Mammary epithelial cell (primary cell): ENCODE measurements at regions of chr20 and their contacts with region 1.

Region 1: DNA sequence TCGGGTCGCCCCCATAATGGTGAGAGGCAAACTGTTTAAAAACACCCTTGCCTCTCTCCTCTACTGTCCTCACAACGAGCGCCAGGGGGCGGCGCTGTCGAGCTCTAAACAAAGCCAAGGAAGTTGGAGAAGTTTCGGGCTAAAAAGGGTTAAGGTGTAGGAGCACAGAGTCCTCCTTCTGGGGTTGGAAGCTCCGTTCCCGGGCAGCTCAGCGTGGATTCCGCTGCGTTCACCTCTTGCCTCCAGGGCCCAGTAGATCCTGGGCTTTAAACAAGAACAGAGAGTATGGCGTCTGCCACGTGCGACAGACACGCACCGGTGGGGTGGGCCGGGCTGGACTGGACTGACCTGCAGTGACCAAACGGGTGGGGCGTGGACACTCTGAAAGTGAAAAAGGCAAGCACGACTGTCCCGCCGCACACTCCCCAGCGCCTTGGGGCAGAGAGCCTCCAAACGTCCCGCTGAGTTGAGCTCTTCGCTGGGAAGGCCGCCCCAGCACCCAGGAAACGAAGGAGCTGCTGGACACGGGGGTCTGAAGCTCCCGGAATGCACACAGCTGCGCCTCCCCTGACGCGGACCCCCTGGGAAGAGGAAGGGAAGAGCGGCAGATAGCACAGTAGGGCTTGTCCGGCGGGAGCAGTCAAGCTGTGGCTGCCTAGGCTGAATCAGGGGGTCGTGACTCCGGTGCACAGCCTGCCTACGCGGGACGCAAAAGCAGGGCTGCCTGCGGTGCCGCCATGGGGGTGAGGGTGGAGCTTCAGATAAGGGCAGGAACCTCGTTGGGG is 1.6 kb upstream of the THBD start:
- DNase-seq: peak; percentile 63
- H3K4me3 ChIP-seq: peak overlapping the region in 2 of 3 experiments; percentile 53 to 55
- H3K27ac ChIP-seq: no peak overlapping the region
- H3K4me1 ChIP-seq: peaks cover 38% of the 10 kb centered on the region
- H3K27me3 ChIP-seq: no peaks in the 10 kb centered on the region
- CTCF ChIP-seq: peak; percentile 76 to 81

Region 2: DNA sequence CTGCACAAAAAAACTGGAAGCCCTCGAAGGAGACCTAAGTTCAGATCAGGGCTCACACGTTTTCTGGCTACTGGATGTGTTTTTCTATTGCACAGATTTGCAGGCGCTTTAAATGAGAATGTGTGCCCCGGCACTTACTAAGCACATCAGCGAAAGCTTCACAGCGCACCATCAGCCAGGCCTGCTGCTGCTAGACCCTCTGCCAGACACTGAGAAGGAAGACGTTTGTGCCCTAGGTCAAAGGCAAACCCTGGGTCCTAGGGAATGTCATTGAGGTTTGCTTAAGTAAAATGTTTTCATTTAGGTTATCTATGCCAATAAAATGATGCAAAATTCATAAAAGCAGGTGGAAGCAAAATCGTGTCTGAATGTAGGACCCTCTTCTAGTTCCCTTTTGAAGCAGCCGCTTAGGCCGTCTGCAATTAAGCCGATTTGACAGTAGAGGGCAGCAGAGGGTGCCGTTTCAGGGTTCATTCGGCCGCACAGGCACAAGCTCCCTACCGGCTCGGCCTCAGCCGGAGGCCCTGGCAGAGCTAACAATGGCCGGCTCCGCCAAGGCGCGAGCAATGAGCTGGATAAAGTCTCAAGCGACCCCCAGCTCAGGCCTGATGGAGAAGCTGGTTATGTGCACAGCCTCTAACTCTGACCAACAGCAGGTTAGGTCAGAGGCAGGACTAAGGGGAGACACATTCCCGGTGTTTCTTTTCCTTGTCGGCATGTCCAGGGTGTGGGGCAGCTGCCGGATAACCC is 359.5 kb before region 1 on chr20:
- CTCF ChIA-PET with region 1: no interaction called
- dilution Hi-C with region 1: no loop called
- in situ Hi-C with region 1: no loop called
- intact Hi-C with region 1: loop called (anchors 1 kb)
- DNase-seq: peak; percentile 43
- H3K4me3 ChIP-seq: no peak overlapping the region
- H3K27ac ChIP-seq: no peak overlapping the region
- H3K4me1 ChIP-seq: peaks cover 6% of the 10 kb centered on the region
- H3K27me3 ChIP-seq: no peaks in the 10 kb centered on the region
- CTCF ChIP-seq: peak; percentile 87 to 90

Region 3: DNA sequence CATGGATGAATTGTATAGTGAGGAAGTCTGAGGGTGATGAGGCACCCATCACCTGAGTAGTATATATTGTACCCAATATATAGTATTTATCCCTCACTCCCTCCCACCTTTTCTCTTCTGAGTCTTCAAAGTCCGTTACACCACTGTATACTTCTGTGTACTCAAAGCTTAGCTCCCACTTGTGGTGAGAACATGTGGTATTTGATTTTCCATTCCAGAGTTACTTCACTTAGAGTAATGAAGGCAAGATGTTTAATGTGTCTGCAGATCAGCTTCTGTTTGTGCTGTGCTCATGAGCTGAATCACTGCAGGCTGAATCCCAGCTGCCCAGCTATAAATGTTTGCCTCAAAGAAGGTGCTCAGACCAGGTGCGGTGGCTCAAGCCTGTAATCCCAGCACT is 327.4 kb before region 1 on chr20:
- CTCF ChIA-PET with region 1: no interaction called
- dilution Hi-C with region 1: no loop called
- in situ Hi-C with region 1: loop called in 1 of 2 experiments (anchors 25 kb)
- intact Hi-C with region 1: loop called (anchors 2 kb)
- DNase-seq: no peak
- H3K4me3 ChIP-seq: no peak overlapping the region
- H3K27ac ChIP-seq: no peak overlapping the region
- H3K4me1 ChIP-seq: peaks cover 7% of the 10 kb centered on the region
- H3K27me3 ChIP-seq: no peaks in the 10 kb centered on the region
- CTCF ChIP-seq: peak in 1 of 2 donors; percentile 1

Region 4: DNA sequence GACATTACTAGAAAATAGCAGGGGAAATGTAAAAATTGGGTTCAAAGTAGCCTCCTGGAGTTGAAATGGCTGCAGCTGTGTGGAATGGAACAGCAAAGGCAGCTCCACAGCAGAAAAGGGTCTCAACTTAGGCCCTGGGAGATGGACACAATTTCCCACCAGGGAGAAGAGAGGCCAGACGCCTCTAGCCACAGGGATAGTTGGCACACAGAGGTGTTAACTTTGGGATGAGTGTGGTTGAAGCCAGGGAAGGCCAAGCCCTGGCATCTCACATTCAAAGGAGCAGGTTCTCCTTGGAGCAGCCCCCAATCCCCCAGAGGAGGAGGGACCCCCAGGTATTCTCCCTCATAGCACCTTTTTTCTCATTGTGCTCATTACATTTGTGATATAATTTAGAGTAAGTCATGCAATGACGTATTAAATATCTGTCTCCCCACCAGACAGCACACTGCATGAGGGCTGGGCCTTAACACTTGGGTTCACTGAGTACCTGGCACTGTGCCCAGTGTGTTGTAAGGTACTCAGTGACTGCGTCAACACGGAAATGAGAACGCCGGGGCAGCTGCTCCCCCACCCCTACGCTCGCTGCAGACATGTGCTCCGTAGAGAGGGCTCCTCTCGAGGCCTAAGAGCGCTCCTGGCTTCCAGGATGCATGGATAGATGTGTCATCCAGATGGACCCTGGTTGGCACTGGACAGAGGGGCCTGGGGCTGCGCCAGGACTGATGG is 111.1 kb after region 1 on chr20:
- CTCF ChIA-PET with region 1: no interaction called
- dilution Hi-C with region 1: no loop called
- in situ Hi-C with region 1: loop called in 1 of 2 experiments (anchors 10 kb)
- intact Hi-C with region 1: no loop called
- DNase-seq: no peak
- H3K4me3 ChIP-seq: no peak overlapping the region
- H3K27ac ChIP-seq: no peak overlapping the region
- H3K4me1 ChIP-seq: peaks cover 31% of the 10 kb centered on the region
- H3K27me3 ChIP-seq: no peaks in the 10 kb centered on the region
- CTCF ChIP-seq: no peak

Region 5: GRCh38 chr20:23200918-23201317 is 149.9 kb after region 1 on chr20:
- CTCF ChIA-PET with region 1: interaction called, 3 read pairs
- dilution Hi-C with region 1: no loop called
- in situ Hi-C with region 1: loop called in 1 of 2 experiments (anchors 10 kb)
- intact Hi-C with region 1: loop called (anchors 1 kb)
- DNase-seq: peak; percentile 45
- H3K4me3 ChIP-seq: no peak overlapping the region
- H3K27ac ChIP-seq: no peak overlapping the region
- H3K4me1 ChIP-seq: no peaks in the 10 kb centered on the region
- H3K27me3 ChIP-seq: no peaks in the 10 kb centered on the region
- CTCF ChIP-seq: peak; percentile 62 to 84

Region 6: DNA sequence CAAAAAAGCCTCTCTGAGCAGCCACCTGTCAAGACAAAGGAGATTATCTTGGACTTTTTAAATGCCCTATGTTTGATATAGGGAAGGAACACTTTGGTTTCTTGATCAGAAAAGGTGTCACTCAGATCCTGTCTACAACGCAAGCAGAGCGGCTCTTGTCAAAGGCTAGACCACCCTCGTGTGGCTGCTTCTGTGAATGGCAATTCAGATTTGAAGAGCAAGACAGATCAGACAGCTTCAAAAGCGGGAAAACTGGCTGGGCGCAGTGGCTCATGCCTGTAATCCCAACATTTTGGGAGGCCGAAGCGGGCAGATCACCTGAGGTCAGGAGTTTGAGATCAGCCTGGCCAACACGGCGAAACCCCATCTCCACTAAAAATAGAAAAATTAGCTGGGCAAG is 289.5 kb after region 1 on chr20:
- CTCF ChIA-PET with region 1: no interaction called
- dilution Hi-C with region 1: no loop called
- in situ Hi-C with region 1: loop called in 1 of 2 experiments (anchors 25 kb)
- intact Hi-C with region 1: loop called (anchors 1 kb)
- DNase-seq: peak; percentile 49
- H3K4me3 ChIP-seq: no peak overlapping the region
- H3K27ac ChIP-seq: no peak overlapping the region
- H3K4me1 ChIP-seq: no peaks in the 10 kb centered on the region
- H3K27me3 ChIP-seq: no peaks in the 10 kb centered on the region
- CTCF ChIP-seq: peak; percentile 39 to 56